ENCODE measurements at regions of chr6 and their contacts with region 1.

Region 1: GRCh38 chr6:149431905-149432775 is 32.1 kb downstream of the SUMO4 start:
- DNase-seq: peak; percentile 16
- H3K4me3 ChIP-seq: peak overlapping the region in 1 of 4 donors; percentile 18
- H3K27ac ChIP-seq: peak overlapping the region in 2 of 4 donors; percentile 5 to 29
- H3K4me1 ChIP-seq: peaks cover 0 to 7% (median 0%) of the 10 kb centered on the region in 3 donors
- H3K27me3 ChIP-seq: peaks cover 0 to 36% (median 0%) of the 10 kb centered on the region in 4 donors
- CTCF ChIP-seq: peak; percentile 92 to 96 (median 93)
- POLR2A ChIP-seq: no peak

Region 2: GRCh38 chr6:149028767-149029405 is 403.3 kb before region 1 on chr6:
- intact Hi-C with region 1: loop called (anchors 5 kb)
- DNase-seq: no peak
- H3K4me3 ChIP-seq: no peak overlapping the region
- H3K27ac ChIP-seq: no peak overlapping the region
- H3K4me1 ChIP-seq: peaks cover 0 to 14% (median 7%) of the 10 kb centered on the region in 3 donors
- H3K27me3 ChIP-seq: no peaks in the 10 kb centered on the region
- CTCF ChIP-seq: peak; percentile 50 to 79 (median 73)
- POLR2A ChIP-seq: no peak

Region 3: GRCh38 chr6:149082286-149082707 is 349.8 kb before region 1 on chr6:
- intact Hi-C with region 1: loop called (anchors 5 kb)
- DNase-seq: peak; percentile 5
- H3K4me3 ChIP-seq: no peak overlapping the region
- H3K27ac ChIP-seq: no peak overlapping the region
- H3K4me1 ChIP-seq: peaks cover 0 to 29% (median 10%) of the 10 kb centered on the region in 3 donors
- H3K27me3 ChIP-seq: peaks cover 0 to 5% (median 0%) of the 10 kb centered on the region in 4 donors
- CTCF ChIP-seq: peak; percentile 62 to 86 (median 76)
- POLR2A ChIP-seq: no peak

Region 4: DNA sequence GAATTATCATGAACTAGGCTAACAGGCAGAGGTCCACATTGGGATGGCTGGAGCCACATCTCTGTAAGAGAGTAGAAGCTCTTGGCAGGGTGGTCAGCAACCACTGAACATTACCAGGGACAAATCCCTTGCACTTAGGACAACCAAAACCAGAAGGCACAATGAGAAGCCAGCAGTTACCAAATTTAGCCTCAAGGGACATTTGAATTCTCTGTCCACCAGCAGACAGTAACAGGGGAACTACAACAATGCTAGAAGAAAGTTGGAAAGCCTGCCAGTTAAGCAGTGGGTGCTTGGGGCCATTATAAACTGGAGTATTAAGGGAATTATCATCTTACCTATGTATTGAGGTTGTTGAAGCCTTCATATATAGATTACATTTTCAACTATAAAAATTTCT is 131.1 kb before region 1 on chr6:
- intact Hi-C with region 1: no loop called
- DNase-seq: no peak
- H3K4me3 ChIP-seq: no peak overlapping the region
- H3K27ac ChIP-seq: no peak overlapping the region
- H3K4me1 ChIP-seq: no peaks in the 10 kb centered on the region
- H3K27me3 ChIP-seq: no peaks in the 10 kb centered on the region
- CTCF ChIP-seq: no peak
- POLR2A ChIP-seq: no peak

Region 5: DNA sequence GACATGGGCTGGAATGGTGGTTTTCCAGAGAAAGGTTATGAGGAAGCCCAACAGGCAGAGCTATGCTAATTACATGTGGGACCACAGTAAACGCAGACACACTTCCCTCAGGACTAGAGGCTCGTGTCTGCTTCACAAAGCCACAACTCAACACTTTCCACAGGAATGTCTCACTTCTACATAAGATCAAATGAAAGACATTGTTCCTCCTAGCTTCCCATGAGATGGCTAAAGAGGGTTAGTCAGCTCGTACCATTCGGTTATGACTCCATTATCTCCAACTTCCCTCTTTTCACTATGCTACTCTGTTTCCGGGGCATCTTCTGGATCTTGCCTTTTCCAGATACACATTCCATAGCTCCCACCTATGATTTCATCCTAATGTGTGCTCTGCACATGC is 81.8 kb after region 1 on chr6:
- intact Hi-C with region 1: loop called (anchors 10 kb)
- DNase-seq: no peak
- H3K4me3 ChIP-seq: no peak overlapping the region
- H3K27ac ChIP-seq: no peak overlapping the region
- H3K4me1 ChIP-seq: peaks cover 0 to 7% (median 0%) of the 10 kb centered on the region in 3 donors
- H3K27me3 ChIP-seq: no peaks in the 10 kb centered on the region
- CTCF ChIP-seq: no peak
- POLR2A ChIP-seq: no peak

Region 6: DNA sequence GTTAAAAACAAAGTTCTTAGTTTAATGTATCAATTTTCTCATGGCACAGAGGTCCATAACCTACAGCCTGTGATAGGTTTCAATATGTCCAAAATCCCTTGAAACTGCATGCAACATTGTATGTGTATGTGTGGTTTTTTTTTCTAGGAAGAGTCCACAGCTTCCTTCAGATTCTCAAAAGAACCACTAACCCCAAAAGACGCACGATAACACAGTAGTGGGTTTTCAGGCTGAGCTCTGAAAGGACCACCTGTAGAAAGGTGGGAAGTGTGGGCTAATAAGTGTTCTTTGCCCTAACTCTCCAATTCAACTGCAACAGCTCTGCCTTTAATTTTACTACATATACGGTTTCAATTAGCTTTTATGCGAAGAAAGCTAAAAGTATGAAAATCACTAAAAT is 227.9 kb after region 1 on chr6:
- intact Hi-C with region 1: no loop called
- DNase-seq: no peak
- H3K4me3 ChIP-seq: no peak overlapping the region
- H3K27ac ChIP-seq: no peak overlapping the region
- H3K4me1 ChIP-seq: no peaks in the 10 kb centered on the region
- H3K27me3 ChIP-seq: no peaks in the 10 kb centered on the region
- CTCF ChIP-seq: no peak
- POLR2A ChIP-seq: no peak